ENCODE measurements at regions of chr2 and their contacts with region 1.

Region 1: DNA sequence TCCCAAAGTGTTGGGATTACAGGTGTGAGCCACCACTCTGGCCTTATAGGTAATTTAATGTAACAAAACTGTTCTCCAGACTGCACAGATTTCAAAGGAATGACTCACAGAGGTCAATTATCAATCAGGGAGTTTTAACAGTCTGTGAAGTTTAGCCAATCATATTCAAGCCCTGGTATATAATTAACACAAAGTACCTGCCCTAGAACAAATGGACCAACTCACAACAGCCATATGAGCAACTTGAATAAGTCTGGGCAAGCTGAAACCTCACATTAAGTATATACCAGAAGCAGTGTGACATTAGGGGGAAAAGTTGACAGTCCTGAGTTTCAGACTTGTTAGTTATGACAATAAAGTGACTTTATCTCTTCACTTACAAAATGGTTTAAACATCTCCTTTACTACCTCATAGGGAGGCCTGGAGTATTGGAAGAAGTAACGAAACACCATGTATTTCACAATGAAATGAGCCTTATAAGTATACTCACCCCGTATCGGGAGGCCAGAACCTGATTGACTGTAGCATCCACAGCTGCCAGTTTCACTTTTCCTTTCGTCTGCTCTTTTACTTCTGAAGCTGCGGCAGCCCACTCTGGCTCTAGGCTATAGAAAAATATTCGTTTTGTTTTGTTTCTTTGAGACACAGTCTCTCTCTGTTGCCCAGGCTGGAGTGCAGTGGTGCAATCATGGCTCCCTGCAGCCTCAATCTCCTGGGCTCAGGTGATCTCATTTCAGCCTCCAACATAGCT is 22.2 kb downstream of the PDIA6 start:
- DNase-seq: no peak
- H3K4me3 ChIP-seq: no peak overlapping the region
- H3K4me3 Mint-ChIP-seq: no peak overlapping the region
- H3K27ac Mint-ChIP-seq: peak overlapping the region; percentile 62
- H3K4me1 ChIP-seq: peaks cover 16% of the 10 kb centered on the region
- H3K4me1 Mint-ChIP-seq: peaks cover 12% of the 10 kb centered on the region
- H3K27me3 ChIP-seq: no peaks in the 10 kb centered on the region
- H3K27me3 Mint-ChIP-seq: no peaks in the 10 kb centered on the region
- CTCF ChIP-seq: no peak

Region 2: DNA sequence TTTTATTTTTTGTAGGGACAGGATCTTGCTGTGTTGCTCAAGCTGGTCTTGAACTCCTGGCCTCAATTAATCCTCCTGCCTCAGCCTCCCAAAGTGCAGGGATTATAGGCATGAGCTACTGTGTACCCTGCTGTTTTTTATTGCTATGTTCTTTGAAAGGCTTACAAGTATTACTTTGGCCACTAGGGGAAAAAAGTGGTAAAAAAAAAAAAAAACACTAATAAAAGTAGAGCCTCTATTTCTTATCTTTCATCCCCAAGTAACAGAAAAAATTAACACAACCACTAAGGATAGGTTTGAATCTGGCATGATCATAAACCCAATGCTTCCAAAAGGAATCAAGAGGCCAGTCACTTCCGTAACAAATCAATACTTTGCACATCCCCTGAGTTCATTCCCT is 112.2 kb before region 1 on chr2:
- CTCF ChIA-PET with region 1: no interaction called
- POLR2A ChIA-PET with region 1: interaction called, 18 read pairs
- intact Hi-C with region 1: no loop called
- DNase-seq: no peak
- H3K4me3 ChIP-seq: no peak overlapping the region
- H3K4me3 Mint-ChIP-seq: no peak overlapping the region
- H3K27ac Mint-ChIP-seq: no peak overlapping the region
- H3K4me1 ChIP-seq: no peaks in the 10 kb centered on the region
- H3K4me1 Mint-ChIP-seq: no peaks in the 10 kb centered on the region
- H3K27me3 ChIP-seq: no peaks in the 10 kb centered on the region
- H3K27me3 Mint-ChIP-seq: no peaks in the 10 kb centered on the region
- CTCF ChIP-seq: peak; percentile 8 to 30

Measured in Caco-2 (cell line).